WTC11 (cell line): ENCODE measurements at regions of chr14 and their contacts with region 1.

Region 1: GRCh38 chr14:99320105-99320572 is 48.1 kb upstream of the BCL11B start:
- DNase-seq: peak; percentile 85
- ATAC-seq: peak; percentile 87
- H3K4me3 Mint-ChIP-seq: no peak overlapping the region
- H3K27ac Mint-ChIP-seq: no peak overlapping the region
- H3K4me1 Mint-ChIP-seq: peaks cover 19% of the 10 kb centered on the region
- H3K27me3 Mint-ChIP-seq: no peaks in the 10 kb centered on the region
- CTCF ChIP-seq: peak; percentile 95

Region 2: DNA sequence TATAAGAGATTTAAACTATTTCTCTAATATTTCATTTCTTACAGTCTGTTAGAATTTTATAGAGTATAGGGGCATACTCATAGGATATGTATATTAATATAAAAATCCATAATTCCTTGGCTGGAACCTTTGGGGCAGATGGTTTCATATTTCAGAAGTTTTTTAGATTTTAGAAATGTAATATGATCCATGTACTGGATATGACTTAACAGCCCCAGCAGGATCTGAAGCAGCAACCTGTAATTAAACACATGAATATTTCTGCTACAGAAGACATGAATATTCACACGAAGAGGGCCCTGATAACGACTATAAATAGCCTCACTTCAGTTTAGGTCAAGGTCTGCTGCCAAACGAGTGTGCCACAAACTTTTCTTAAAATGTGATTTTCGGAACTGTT is 655.9 kb before region 1 on chr14:
- CTCF ChIA-PET with region 1: no interaction called
- POLR2A ChIA-PET with region 1: no interaction called
- DNase-seq: no peak
- ATAC-seq: no peak
- H3K4me3 Mint-ChIP-seq: no peak overlapping the region
- H3K27ac Mint-ChIP-seq: no peak overlapping the region
- H3K4me1 Mint-ChIP-seq: peaks cover 8% of the 10 kb centered on the region
- H3K27me3 Mint-ChIP-seq: no peaks in the 10 kb centered on the region
- CTCF ChIP-seq: no peak

Region 3: GRCh38 chr14:99230208-99231151 is 89.7 kb before region 1 on chr14:
- CTCF ChIA-PET with region 1: interaction called, 10 read pairs
- POLR2A ChIA-PET with region 1: no interaction called
- DNase-seq: no peak
- ATAC-seq: no peak
- H3K4me3 Mint-ChIP-seq: peak overlapping the region; percentile 65
- H3K27ac Mint-ChIP-seq: peak overlapping the region; percentile 93
- H3K4me1 Mint-ChIP-seq: peaks cover 60% of the 10 kb centered on the region
- H3K27me3 Mint-ChIP-seq: no peaks in the 10 kb centered on the region
- CTCF ChIP-seq: no peak

Region 4: GRCh38 chr14:99277530-99277929 is 42.6 kb before region 1 on chr14:
- CTCF ChIA-PET with region 1: interaction called, 29 read pairs
- POLR2A ChIA-PET with region 1: no interaction called
- DNase-seq: no peak
- ATAC-seq: no peak
- H3K4me3 Mint-ChIP-seq: no peak overlapping the region
- H3K27ac Mint-ChIP-seq: no peak overlapping the region
- H3K4me1 Mint-ChIP-seq: peaks cover 40% of the 10 kb centered on the region
- H3K27me3 Mint-ChIP-seq: no peaks in the 10 kb centered on the region; the same call in 1 of the 2 replicates
- CTCF ChIP-seq: no peak

Region 5: GRCh38 chr14:99300190-99300589 is 19.9 kb before region 1 on chr14:
- CTCF ChIA-PET with region 1: interaction called, 32 read pairs
- POLR2A ChIA-PET with region 1: no interaction called
- DNase-seq: no peak
- ATAC-seq: peak; percentile 85
- H3K4me3 Mint-ChIP-seq: no peak overlapping the region; the same call in 1 of the 2 replicates
- H3K27ac Mint-ChIP-seq: peak overlapping the region; percentile 83
- H3K4me1 Mint-ChIP-seq: peaks cover 12% of the 10 kb centered on the region
- H3K27me3 Mint-ChIP-seq: peaks cover 7% of the 10 kb centered on the region
- CTCF ChIP-seq: no peak

Region 6: GRCh38 chr14:99378782-99379214 is 58.7 kb after region 1 on chr14:
- CTCF ChIA-PET with region 1: interaction called, 10 read pairs
- POLR2A ChIA-PET with region 1: no interaction called
- DNase-seq: no peak
- ATAC-seq: no peak
- H3K4me3 Mint-ChIP-seq: no peak overlapping the region
- H3K27ac Mint-ChIP-seq: no peak overlapping the region
- H3K4me1 Mint-ChIP-seq: peaks cover 16% of the 10 kb centered on the region
- H3K27me3 Mint-ChIP-seq: no peaks in the 10 kb centered on the region
- CTCF ChIP-seq: no peak

Region 7: GRCh38 chr14:99408286-99408970 is 88.3 kb after region 1 on chr14:
- CTCF ChIA-PET with region 1: interaction called, 85 read pairs
- POLR2A ChIA-PET with region 1: no interaction called
- DNase-seq: no peak
- ATAC-seq: peak; percentile 9; the same call in 1 of the 2 replicates
- H3K4me3 Mint-ChIP-seq: no peak overlapping the region
- H3K27ac Mint-ChIP-seq: peak overlapping the region; percentile 80
- H3K4me1 Mint-ChIP-seq: peaks cover 68% of the 10 kb centered on the region
- H3K27me3 Mint-ChIP-seq: no peaks in the 10 kb centered on the region
- CTCF ChIP-seq: no peak